Lower leg skin (tissue), 4 donors: ENCODE measurements at regions of chr10 and their contacts with region 1.

Region 1: DNA sequence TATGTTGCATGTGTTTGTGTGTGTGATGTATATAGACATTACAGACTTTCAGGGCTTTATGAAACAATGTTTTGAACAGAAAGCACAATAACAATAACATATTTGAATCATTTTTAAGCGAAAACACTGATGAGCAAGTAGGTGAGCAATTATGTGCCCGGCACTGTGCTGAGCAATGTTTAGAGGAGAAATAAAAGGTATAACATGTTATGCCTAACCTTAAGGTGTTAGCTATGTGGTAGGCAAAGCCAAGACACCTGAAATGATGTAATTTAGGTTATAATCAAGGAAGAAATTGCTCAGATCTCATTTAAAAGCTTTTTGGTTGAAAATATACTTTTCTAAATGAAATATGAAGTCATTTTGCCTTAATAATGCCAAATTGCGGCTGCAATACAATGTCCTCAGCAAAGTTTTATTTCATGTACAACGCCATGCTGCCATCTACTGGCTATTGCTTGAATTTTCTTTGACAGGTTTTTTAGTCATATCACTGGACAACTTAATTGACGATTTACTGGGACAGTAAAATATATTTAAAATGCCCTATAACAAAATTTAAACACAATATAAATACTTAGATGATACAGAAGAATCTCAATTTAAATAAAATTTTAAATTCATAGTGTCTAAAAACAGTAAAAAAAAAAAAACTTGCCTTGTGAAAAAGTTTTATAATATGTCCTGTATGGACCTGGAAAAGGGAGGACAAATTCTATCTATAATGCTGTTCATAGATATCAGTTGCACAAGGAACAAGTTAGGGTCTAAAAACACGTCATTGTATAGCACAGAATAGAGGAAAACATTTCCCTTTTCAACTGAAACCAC is 131.1 kb upstream of the CDK1 start:
- DNase-seq: peak in 1 of 2 donors; percentile 30
- H3K4me3 ChIP-seq: no peak overlapping the region
- CTCF ChIP-seq: peak in 1 of 3 donors; percentile 70
- POLR2A ChIP-seq: no peak

Region 2: DNA sequence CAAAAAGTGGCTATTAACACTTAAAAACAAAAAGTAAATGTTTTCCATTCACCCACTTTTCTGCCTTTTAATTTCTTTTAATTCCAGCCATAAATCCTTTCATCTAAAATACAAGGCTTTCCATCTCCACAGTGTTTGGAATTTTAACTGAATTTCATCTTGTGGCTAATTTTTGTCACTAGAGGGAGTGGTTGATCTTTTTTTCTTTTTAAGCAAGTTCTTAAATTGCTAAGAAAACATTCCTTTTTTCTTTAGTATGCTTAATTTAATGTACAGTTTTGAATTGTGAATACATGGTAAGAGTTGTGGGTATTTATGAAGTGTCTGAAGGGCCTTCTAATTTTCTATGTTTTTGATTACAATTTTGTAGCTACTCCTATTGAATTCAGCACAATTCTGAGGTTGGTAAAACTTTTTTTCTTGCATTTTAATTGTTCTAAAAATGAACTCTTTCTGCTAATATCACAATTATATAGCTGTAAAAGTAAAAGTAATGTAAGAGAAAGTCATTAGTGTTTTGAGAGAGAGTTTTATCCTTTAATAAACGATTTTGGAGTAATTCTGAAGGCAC is 202.6 kb before region 1 on chr10:
- intact Hi-C with region 1: loop called (anchors 10 kb)
- DNase-seq: no peak
- H3K4me3 ChIP-seq: no peak overlapping the region
- CTCF ChIP-seq: no peak
- POLR2A ChIP-seq: no peak